ENCODE measurements at regions of chr20 and their contacts with region 1.

Region 1: GRCh38 chr20:3470627-3471396 is at the start of gene ATRN:
- DNase-seq: peak; percentile 87
- ATAC-seq: peak; percentile 90
- H3K4me3 ChIP-seq: peak within 1 kb of the TSS; percentile 79 to 99 (median 82)
- H3K27ac ChIP-seq: peak within 1 kb of the TSS; percentile 65
- H3K4me1 ChIP-seq: peaks cover 41% of the 10 kb centered on the region
- H3K27me3 ChIP-seq: peaks cover 0 to 4% of the 10 kb centered on the region in 2 experiments; a peak in 2 of 5 replicates
- CTCF ChIP-seq: no peak; the same call in none of the 2 replicates
- EP300 ChIP-seq: peak; percentile 47; a peak in 3 of 4 replicates
- POLR2A ChIP-seq: peak; percentile 98 to 100
- RAD21 ChIP-seq: peak; percentile 80
- total RNA-seq, gene ATRN: 30.8 and 44.2 TPM in 2 replicates

Region 2: GRCh38 chr20:3340443-3340842 is 130.4 kb before region 1 on chr20:
- CTCF ChIA-PET with region 1: no interaction called
- POLR2A ChIA-PET with region 1: no interaction called
- in situ Hi-C with region 1: no loop called
- intact Hi-C with region 1: no loop called
- DNase-seq: no peak
- ATAC-seq: no peak
- H3K4me3 ChIP-seq: no peak overlapping the region
- H3K27ac ChIP-seq: no peak overlapping the region
- H3K4me1 ChIP-seq: no peaks in the 10 kb centered on the region
- H3K27me3 ChIP-seq: no peaks in the 10 kb centered on the region
- CTCF ChIP-seq: no peak
- EP300 ChIP-seq: no peak
- POLR2A ChIP-seq: no peak
- RAD21 ChIP-seq: no peak

Region 3: DNA sequence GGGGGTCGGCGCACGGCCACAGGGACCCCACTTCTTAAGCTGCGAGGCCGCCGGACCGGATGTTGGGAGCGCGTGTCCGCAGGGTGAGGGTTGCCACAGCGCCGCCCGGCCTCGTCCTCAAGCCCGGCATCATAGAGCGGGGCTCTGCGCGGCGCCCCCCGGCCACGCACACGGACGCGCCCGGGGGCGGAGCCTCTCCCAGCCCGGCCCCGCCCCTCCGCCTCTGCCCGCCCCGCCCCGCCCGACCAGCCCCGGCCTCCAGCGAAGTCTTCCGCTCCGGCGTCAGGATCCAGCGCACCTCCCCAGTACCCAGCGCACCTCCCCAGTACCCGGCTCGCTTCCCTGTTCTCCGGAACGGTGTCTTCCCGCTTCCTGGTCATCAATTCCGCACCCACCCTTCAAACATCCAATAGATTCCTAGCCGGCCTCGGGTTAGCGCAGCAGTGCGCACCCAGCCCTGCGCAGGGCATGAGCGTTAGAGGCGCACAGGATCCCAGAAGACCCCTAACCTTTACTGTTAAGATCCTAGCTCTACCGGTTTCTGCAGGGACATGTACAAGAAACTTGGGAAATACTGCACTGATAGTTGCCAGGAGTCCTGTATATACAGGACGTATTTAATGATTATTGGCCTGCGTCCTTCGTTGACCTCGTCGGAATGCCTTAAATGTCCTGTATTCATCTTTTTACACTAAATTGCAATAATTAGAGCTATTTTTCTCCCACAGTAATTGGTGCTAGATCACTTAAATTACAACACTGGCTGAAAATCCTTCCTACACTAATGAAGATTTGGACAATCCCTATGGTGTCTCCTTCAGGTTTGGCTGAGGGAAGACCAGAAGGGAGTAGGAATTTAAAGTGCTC is 62.8 kb before region 1 on chr20:
- CTCF ChIA-PET with region 1: no interaction called
- POLR2A ChIA-PET with region 1: interaction called, 34 read pairs
- in situ Hi-C with region 1: no loop called
- intact Hi-C with region 1: loop called (anchors 2 kb)
- DNase-seq: peak; percentile 81
- ATAC-seq: peak; percentile 79
- H3K4me3 ChIP-seq: peak overlapping the region; percentile 68 to 90 (median 76)
- H3K27ac ChIP-seq: peak overlapping the region; percentile 67
- H3K4me1 ChIP-seq: peaks cover 46% of the 10 kb centered on the region
- H3K27me3 ChIP-seq: peaks cover 0 to 5% of the 10 kb centered on the region in 2 experiments; a peak in 1 of 5 replicates
- CTCF ChIP-seq: no peak
- EP300 ChIP-seq: 0 out of 4 replicates have a peak, but pooled peaks have one; percentile 5 to 40
- POLR2A ChIP-seq: peak; percentile 66 to 81
- RAD21 ChIP-seq: peak; percentile 7; the same call in 1 of the 2 replicates

Region 4: DNA sequence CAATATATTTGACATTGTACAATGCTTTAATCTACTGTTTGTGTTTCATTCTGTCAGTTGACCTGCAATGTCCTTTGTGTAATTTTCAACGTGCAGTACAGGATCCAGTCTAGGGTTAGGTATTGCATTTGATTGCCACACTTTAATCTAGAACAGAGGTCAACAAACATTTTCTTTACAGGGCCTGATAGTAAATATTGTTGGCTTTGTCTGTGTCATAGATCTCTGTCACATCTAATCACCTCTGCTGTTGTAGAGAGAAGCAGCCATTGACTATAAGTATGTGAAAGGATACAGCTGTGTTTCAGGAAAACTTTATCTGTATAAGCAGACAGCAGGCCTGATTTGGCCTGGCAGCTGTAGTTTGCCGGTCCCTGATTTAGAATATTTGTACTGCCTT is 39.3 kb after region 1 on chr20:
- CTCF ChIA-PET with region 1: no interaction called
- POLR2A ChIA-PET with region 1: interaction called, 5 read pairs
- in situ Hi-C with region 1: no loop called
- intact Hi-C with region 1: loop called (anchors 5 kb)
- DNase-seq: peak; percentile 87
- ATAC-seq: peak; percentile 99
- H3K4me3 ChIP-seq: no peak overlapping the region
- H3K27ac ChIP-seq: peak overlapping the region; percentile 55
- H3K4me1 ChIP-seq: peaks cover 30% of the 10 kb centered on the region
- H3K27me3 ChIP-seq: no peaks in the 10 kb centered on the region
- CTCF ChIP-seq: no peak
- EP300 ChIP-seq: peak; percentile 48 to 86; a peak in 3 of 4 replicates
- POLR2A ChIP-seq: no peak
- RAD21 ChIP-seq: no peak

Region 5: DNA sequence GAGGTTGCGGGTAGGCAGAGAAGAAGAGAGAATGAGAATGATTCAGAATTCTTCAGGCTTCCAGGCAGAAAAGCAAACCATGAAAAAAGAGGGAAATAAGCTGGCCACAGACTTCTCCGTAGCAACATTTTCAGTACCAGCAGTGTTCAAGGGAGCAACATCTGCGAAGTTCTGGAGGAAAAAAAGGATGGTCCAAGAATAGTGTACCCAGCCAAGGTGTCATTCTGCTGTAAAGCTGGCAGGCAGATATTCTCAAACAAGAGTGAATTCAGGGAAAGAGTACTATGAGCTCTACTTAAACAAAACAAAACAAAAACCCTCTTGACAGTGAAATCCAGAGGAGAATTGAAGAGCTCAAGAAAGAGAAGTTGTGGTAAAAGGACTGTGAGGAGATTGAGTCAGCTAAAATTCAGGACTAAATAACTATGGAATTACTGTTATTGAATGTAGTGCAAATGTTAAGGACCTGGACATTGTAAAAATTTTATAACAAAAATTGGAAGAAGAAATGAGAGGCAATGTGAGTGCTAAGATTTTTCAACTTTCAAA is 86.5 kb after region 1 on chr20:
- CTCF ChIA-PET with region 1: no interaction called
- POLR2A ChIA-PET with region 1: interaction called, 4 read pairs
- in situ Hi-C with region 1: no loop called
- intact Hi-C with region 1: loop called (anchors 5 kb)
- DNase-seq: no peak
- ATAC-seq: no peak
- H3K4me3 ChIP-seq: no peak overlapping the region
- H3K27ac ChIP-seq: no peak overlapping the region
- H3K4me1 ChIP-seq: peaks cover 32% of the 10 kb centered on the region
- H3K27me3 ChIP-seq: no peaks in the 10 kb centered on the region
- CTCF ChIP-seq: no peak
- EP300 ChIP-seq: no peak
- POLR2A ChIP-seq: no peak
- RAD21 ChIP-seq: no peak

Region 6: GRCh38 chr20:3621111-3621510 is 150.3 kb after region 1 on chr20:
- CTCF ChIA-PET with region 1: no interaction called
- POLR2A ChIA-PET with region 1: no interaction called
- in situ Hi-C with region 1: no loop called
- intact Hi-C with region 1: no loop called
- DNase-seq: no peak
- ATAC-seq: no peak
- H3K4me3 ChIP-seq: no peak overlapping the region
- H3K27ac ChIP-seq: no peak overlapping the region
- H3K4me1 ChIP-seq: peaks cover 15% of the 10 kb centered on the region
- H3K27me3 ChIP-seq: no peaks in the 10 kb centered on the region
- CTCF ChIP-seq: no peak
- EP300 ChIP-seq: no peak
- POLR2A ChIP-seq: no peak
- RAD21 ChIP-seq: no peak

Region 7: GRCh38 chr20:3658716-3659491 is 188.1 kb after region 1 on chr20:
- CTCF ChIA-PET with region 1: no interaction called
- POLR2A ChIA-PET with region 1: no interaction called
- in situ Hi-C with region 1: no loop called
- intact Hi-C with region 1: no loop called
- DNase-seq: peak; percentile 81
- ATAC-seq: peak; percentile 79
- H3K4me3 ChIP-seq: peak overlapping the region; percentile 29 to 72 (median 48)
- H3K27ac ChIP-seq: peak overlapping the region; percentile 48
- H3K4me1 ChIP-seq: peaks cover 46% of the 10 kb centered on the region
- H3K27me3 ChIP-seq: peaks cover 6 to 27% of the 10 kb centered on the region in 2 experiments
- CTCF ChIP-seq: 0 out of 2 replicates have a peak, but pooled peaks have one; percentile 4
- EP300 ChIP-seq: no peak
- POLR2A ChIP-seq: peak; percentile 41 to 59; a peak in 3 of 4 replicates
- RAD21 ChIP-seq: no peak

Measured in HepG2 (cell line).